ENCODE measurements at regions of chr1 and their contacts with region 1.

Region 1: GRCh38 chr1:228405987-228406265 is 709 bp downstream of the TRIM11 start:
- DNase-seq: peak; percentile 17
- H3K4me3 Mint-ChIP-seq: peak overlapping the region; percentile 87
- H3K27ac Mint-ChIP-seq: peak overlapping the region; percentile 73
- H3K4me1 Mint-ChIP-seq: peaks cover 43% of the 10 kb centered on the region
- H3K27me3 Mint-ChIP-seq: no peaks in the 10 kb centered on the region

Region 2: GRCh38 chr1:228082135-228082891 is 323.6 kb before region 1 on chr1 and contains the start of gene ARF1:
- CTCF ChIA-PET with region 1: no interaction called
- intact Hi-C with region 1: loop called (anchors 2 kb)
- DNase-seq: peak; percentile 89
- H3K4me3 Mint-ChIP-seq: peak within 1 kb of the TSS; percentile 93
- H3K27ac Mint-ChIP-seq: peak within 1 kb of the TSS; percentile 96
- H3K4me1 Mint-ChIP-seq: peaks cover 50% of the 10 kb centered on the region
- H3K27me3 Mint-ChIP-seq: no peaks in the 10 kb centered on the region
- total RNA-seq, gene ARF1: 346 to 358 TPM

Region 3: GRCh38 chr1:228139944-228140656 is 265.8 kb before region 1 on chr1 and contains the start of gene GUK1:
- CTCF ChIA-PET with region 1: no interaction called
- intact Hi-C with region 1: loop called (anchors 1 kb)
- DNase-seq: peak; percentile 100
- H3K4me3 Mint-ChIP-seq: peak within 1 kb of the TSS; percentile 97
- H3K27ac Mint-ChIP-seq: peak within 1 kb of the TSS; percentile 98
- H3K4me1 Mint-ChIP-seq: peaks cover 25% of the 10 kb centered on the region
- H3K27me3 Mint-ChIP-seq: no peaks in the 10 kb centered on the region
- total RNA-seq, gene GUK1: 206 TPM

Region 4: GRCh38 chr1:228275739-228276421 is 130.0 kb before region 1 on chr1:
- CTCF ChIA-PET with region 1: no interaction called
- intact Hi-C with region 1: loop called (anchors 2 kb)
- DNase-seq: peak; percentile 96
- H3K4me3 Mint-ChIP-seq: peak overlapping the region; percentile 72
- H3K27ac Mint-ChIP-seq: no peak overlapping the region
- H3K4me1 Mint-ChIP-seq: peaks cover 5% of the 10 kb centered on the region
- H3K27me3 Mint-ChIP-seq: no peaks in the 10 kb centered on the region

Region 5: GRCh38 chr1:228423404-228424053 is 17.6 kb after region 1 on chr1:
- CTCF ChIA-PET with region 1: no interaction called
- intact Hi-C with region 1: no loop called
- DNase-seq: no peak
- H3K4me3 Mint-ChIP-seq: no peak overlapping the region
- H3K27ac Mint-ChIP-seq: no peak overlapping the region
- H3K4me1 Mint-ChIP-seq: no peaks in the 10 kb centered on the region
- H3K27me3 Mint-ChIP-seq: peaks cover 8% of the 10 kb centered on the region

Region 6: GRCh38 chr1:228445843-228446650 is 40.1 kb after region 1 on chr1:
- CTCF ChIA-PET with region 1: no interaction called
- intact Hi-C with region 1: no loop called
- DNase-seq: peak; percentile 68
- H3K4me3 Mint-ChIP-seq: peak overlapping the region; percentile 77
- H3K27ac Mint-ChIP-seq: no peak overlapping the region
- H3K4me1 Mint-ChIP-seq: peaks cover 15% of the 10 kb centered on the region
- H3K27me3 Mint-ChIP-seq: peaks cover 32% of the 10 kb centered on the region

Region 7: GRCh38 chr1:228457396-228458176 is 51.7 kb after region 1 on chr1:
- CTCF ChIA-PET with region 1: interaction called, 5 read pairs
- intact Hi-C with region 1: loop called (anchors 1 kb)
- DNase-seq: peak; percentile 93
- H3K4me3 Mint-ChIP-seq: peak overlapping the region; percentile 95
- H3K27ac Mint-ChIP-seq: peak overlapping the region; percentile 97
- H3K4me1 Mint-ChIP-seq: peaks cover 32% of the 10 kb centered on the region
- H3K27me3 Mint-ChIP-seq: peaks cover 7% of the 10 kb centered on the region

Region 8: DNA sequence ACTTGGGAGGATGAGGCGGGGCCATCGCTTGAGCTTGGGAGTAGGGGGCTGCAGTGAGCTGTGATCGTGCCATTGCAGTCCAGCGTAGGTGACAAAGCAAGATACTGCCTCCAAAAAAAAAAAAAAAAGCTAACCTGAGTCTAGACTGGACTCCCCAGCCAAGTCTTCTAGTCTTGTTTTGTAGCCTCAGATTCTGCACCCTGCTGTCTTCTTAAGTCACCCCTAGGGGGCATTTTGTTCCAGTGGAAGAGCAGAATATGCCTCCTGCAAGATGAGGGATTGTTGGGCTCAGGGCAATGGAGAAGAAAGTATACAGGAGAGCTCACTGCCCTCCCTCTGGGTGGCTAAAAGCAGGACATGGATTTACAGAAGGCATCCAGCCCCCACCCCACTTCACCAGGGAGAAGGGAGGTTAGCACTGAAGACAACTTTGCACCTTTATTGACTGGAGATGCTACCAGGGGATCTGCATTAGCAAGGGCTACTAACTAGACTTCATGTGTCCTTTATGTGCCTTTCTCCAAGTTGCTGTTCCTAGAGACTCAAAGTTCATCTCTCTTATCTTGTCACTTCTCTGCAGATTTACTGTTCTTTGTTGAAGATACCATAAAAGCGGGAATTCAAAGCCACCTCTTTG is 66.0 kb after region 1 on chr1:
- CTCF ChIA-PET with region 1: no interaction called
- intact Hi-C with region 1: no loop called
- DNase-seq: peak; percentile 39
- H3K4me3 Mint-ChIP-seq: no peak overlapping the region
- H3K27ac Mint-ChIP-seq: no peak overlapping the region
- H3K4me1 Mint-ChIP-seq: no peaks in the 10 kb centered on the region
- H3K27me3 Mint-ChIP-seq: peaks cover 25% of the 10 kb centered on the region

Measured in activated naive CD4-positive, alpha-beta T cell treated with anti-CD3 and anti-CD28 coated beads for 36 hours (primary cell).